ENCODE measurements at regions of chr1 and their contacts with region 1.

Region 1: DNA sequence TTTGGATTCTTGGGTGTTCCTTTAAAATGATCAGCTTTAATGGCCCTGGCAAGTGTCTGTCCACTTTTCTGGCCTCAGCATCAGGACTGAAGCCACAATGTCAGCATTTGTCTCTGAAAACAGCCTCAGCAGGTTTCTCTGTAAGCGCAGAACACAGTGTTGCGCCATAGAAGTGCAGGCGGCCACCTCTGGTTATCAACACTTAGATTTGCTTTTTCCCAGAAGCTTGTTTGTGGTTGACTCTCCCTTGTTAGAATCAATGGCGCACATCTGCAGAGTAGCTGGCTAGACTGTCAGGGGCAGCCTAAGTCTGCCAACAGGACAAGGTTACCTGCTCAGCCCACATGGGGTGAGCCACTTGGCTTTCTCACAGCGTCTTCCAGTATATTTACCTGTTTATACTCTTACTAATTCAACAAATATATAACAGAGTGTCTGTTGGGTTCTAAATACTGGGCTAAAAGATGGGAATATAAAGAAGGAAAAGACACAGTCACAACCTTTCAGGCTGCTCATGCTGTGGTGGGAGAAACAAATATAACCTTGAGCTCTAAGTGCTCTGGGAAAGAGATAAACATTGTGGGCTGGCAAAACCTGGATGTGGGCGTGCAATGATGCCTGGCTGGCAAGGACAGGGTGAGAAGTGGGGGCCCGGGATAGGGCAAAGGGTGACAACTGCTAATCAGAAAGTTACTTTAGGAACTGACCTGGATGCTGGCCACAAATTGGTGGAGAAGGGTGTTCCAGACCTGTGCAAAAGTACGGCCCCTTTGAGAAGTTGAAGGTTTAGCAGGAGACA is 149.3 kb upstream of the KIAA0040 start:
- DNase-seq: peak in 1 of 2 experiments; percentile 5
- H3K4me3 ChIP-seq: no peak overlapping the region
- H3K4me3 Mint-ChIP-seq: no peak overlapping the region
- H3K27ac Mint-ChIP-seq: no peak overlapping the region
- H3K4me1 ChIP-seq: peaks cover 15% of the 10 kb centered on the region
- H3K4me1 Mint-ChIP-seq: no peaks in the 10 kb centered on the region
- H3K27me3 ChIP-seq: no peaks in the 10 kb centered on the region
- H3K27me3 Mint-ChIP-seq: peaks cover 8% of the 10 kb centered on the region
- CTCF ChIP-seq: no peak

Region 2: GRCh38 chr1:175192630-175193526 is 149.0 kb before region 1 on chr1 and contains the start of gene KIAA0040:
- CTCF ChIA-PET with region 1: interaction called, 10 read pairs
- POLR2A ChIA-PET with region 1: no interaction called
- intact Hi-C with region 1: no loop called
- DNase-seq: peak; percentile 79 to 81
- H3K4me3 ChIP-seq: peak within 1 kb of the TSS; percentile 67
- H3K4me3 Mint-ChIP-seq: peak within 1 kb of the TSS; percentile 87
- H3K27ac Mint-ChIP-seq: peak within 1 kb of the TSS; percentile 94
- H3K4me1 ChIP-seq: no peaks in the 10 kb centered on the region
- H3K4me1 Mint-ChIP-seq: peaks cover 14% of the 10 kb centered on the region
- H3K27me3 ChIP-seq: no peaks in the 10 kb centered on the region
- H3K27me3 Mint-ChIP-seq: no peaks in the 10 kb centered on the region
- CTCF ChIP-seq: peak in 1 of 2 experiments; percentile 37
- total RNA-seq, gene KIAA0040: 18.9 and 24.9 TPM in 2 replicates

Region 3: DNA sequence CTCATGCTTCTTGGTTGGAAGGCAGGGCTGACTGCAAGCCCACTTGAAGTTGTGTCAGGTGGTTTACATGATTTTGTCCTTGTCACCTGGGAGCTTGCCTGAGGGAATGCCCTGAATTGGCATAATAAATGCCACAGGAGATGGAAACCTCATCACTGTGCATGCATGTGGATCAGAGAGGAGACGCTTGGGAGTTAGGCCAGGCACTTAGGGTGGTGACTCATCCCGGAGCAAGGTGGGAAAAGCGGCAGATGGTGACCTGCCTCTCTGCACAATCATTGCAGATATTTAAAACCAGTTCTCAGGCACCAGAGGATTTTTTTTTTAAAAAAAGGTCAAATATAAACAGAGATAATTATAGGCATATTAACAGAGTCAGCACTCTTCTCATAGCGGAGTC is 52.9 kb after region 1 on chr1:
- CTCF ChIA-PET with region 1: no interaction called
- POLR2A ChIA-PET with region 1: no interaction called
- intact Hi-C with region 1: no loop called
- DNase-seq: no peak
- H3K4me3 ChIP-seq: no peak overlapping the region
- H3K4me3 Mint-ChIP-seq: no peak overlapping the region
- H3K27ac Mint-ChIP-seq: no peak overlapping the region
- H3K4me1 ChIP-seq: no peaks in the 10 kb centered on the region
- H3K4me1 Mint-ChIP-seq: no peaks in the 10 kb centered on the region
- H3K27me3 ChIP-seq: no peaks in the 10 kb centered on the region
- H3K27me3 Mint-ChIP-seq: peaks cover 10% of the 10 kb centered on the region
- CTCF ChIP-seq: no peak